ENCODE measurements at regions of chr5 and their contacts with region 1.

Region 1: GRCh38 chr5:149035372-149035790 is 27.5 kb downstream of the SH3TC2 start:
- DNase-seq: peak; percentile 53 to 70 (median 64)
- H3K4me3 ChIP-seq: no peak overlapping the region
- H3K4me3 Mint-ChIP-seq: peak overlapping the region in 1 of 2 donors; percentile 61
- H3K27ac ChIP-seq: no peak overlapping the region
- H3K27ac Mint-ChIP-seq: peak overlapping the region in 3 of 7 donors; percentile 5 to 52 (median 31)
- H3K4me1 ChIP-seq: peaks cover 46 to 52% of the 10 kb centered on the region in 2 donors
- H3K4me1 Mint-ChIP-seq: peaks cover 53% of the 10 kb centered on the region
- H3K27me3 ChIP-seq: no peaks in the 10 kb centered on the region
- H3K27me3 Mint-ChIP-seq: peaks cover 0 to 2% (median 2%) of the 10 kb centered on the region in 3 donors
- CTCF ChIP-seq: peak; percentile 86

Region 2: DNA sequence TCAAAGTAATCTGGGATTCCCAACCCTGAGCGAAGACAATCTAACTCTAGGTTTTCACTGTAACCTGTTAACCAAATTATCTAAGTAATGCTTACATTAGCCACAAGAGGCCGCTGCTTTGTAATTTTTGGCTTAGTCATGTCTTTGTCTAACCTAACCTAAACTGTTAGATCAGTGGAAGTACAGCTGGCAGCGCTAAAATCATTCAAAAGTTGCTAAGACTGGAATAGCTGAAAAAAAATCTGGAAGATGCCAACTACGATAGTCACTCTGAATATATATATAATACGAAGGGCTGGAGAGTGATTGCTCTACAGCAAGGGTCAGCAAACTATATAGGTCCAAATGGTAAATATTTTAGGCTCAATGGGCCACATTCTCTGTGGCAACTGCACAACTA is 591.4 kb before region 1 on chr5:
- intact Hi-C with region 1: loop called (anchors 5 to 10 kb)
- DNase-seq: peak; percentile 27 to 71 (median 48)
- H3K4me3 ChIP-seq: no peak overlapping the region
- H3K4me3 Mint-ChIP-seq: no peak overlapping the region
- H3K27ac ChIP-seq: no peak overlapping the region
- H3K27ac Mint-ChIP-seq: no peak overlapping the region
- H3K4me1 ChIP-seq: no peaks in the 10 kb centered on the region
- H3K4me1 Mint-ChIP-seq: no peaks in the 10 kb centered on the region
- H3K27me3 ChIP-seq: no peaks in the 10 kb centered on the region
- H3K27me3 Mint-ChIP-seq: no peaks in the 10 kb centered on the region
- CTCF ChIP-seq: peak; percentile 79

Measured in CD14-positive monocyte (primary cell).